Gastrocnemius medialis (tissue), 4 donors: ENCODE measurements at regions of chr5 and their contacts with region 1.

Region 1: GRCh38 chr5:72507909-72508575 is 832 bp upstream of the ZNF366 start:
- DNase-seq: no peak
- ATAC-seq: no peak
- H3K4me3 ChIP-seq: peak overlapping the region in 1 of 4 donors; percentile 45
- H3K27ac ChIP-seq: peak overlapping the region; percentile 67 to 82 (median 76)
- H3K4me1 ChIP-seq: peaks cover 60 to 86% of the 10 kb centered on the region in 2 donors
- H3K27me3 ChIP-seq: no peaks in the 10 kb centered on the region
- CTCF ChIP-seq: no peak
- POLR2A ChIP-seq: no peak

Region 2: DNA sequence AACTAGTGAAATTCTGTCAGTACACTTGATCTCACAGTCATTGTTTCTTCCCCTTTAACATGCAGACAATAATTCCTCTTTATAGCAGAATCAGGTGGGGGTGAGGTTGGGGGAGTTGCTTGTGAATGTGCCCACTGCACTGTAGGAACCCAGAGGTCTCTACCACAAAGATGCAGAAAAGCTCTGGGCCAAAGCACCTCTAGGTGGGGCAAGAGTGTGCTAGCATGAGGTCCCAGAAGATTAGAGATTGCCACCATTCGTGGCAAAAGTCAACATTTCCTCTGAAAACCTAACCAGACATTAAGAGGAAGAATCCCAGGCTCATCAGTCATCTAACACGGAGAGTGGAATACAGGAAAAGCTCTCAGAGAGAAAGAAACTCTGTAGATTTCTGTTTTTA is 113.4 kb before region 1 on chr5:
- in situ Hi-C with region 1: no loop called
- intact Hi-C with region 1: loop called (anchors 5 kb)
- DNase-seq: no peak
- ATAC-seq: no peak
- H3K4me3 ChIP-seq: no peak overlapping the region
- H3K27ac ChIP-seq: no peak overlapping the region
- H3K4me1 ChIP-seq: peaks cover 26 to 28% of the 10 kb centered on the region in 2 donors
- H3K27me3 ChIP-seq: no peaks in the 10 kb centered on the region
- CTCF ChIP-seq: peak in 2 of 5 experiments; percentile 12 to 33
- POLR2A ChIP-seq: no peak

Region 3: DNA sequence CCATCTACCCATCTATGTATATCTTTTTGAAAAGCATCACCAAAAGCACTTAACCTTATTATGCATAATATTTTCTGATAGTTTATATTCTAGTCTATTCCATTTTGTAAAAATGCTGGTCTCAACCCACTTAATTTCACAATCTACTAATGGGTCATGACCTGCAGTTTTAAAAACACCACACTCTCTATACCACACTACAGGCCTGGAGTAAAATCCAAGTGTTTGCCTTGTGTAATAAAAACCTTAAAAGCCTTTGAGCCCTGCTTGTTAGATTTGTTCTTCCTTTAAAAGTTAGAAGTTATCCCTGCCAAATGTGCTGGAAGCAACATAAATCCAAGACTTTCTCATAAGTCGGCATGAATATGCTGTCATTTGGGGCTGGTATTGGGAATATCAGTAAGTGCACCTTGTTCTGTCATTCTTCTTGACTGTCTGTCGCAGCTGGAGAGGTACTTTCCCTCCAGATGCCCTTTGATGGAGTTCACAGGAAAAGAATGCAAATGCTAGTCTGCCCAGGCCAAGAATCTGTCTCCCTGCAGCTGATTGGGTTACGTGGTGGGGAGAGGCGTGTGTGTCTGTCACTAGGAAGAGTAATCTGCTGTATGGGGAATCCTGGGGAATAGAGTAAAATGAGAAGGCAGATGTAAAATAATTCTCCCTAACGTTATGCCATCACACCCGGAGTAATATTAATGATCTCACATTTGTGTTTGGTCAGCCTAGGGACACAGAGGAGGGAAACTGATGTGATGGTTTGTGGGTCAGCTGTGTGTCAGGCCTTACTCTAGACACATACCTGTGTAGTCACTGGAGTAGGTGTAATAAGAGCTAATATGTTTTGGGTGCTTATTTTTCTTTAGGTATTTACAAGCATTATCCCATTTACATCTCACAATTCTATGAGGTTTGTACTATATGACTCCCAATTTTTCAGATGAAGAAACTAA is 80.3 kb before region 1 on chr5:
- in situ Hi-C with region 1: no loop called
- intact Hi-C with region 1: no loop called
- DNase-seq: peak; percentile 18 to 55
- ATAC-seq: peak; percentile 81 to 95
- H3K4me3 ChIP-seq: no peak overlapping the region
- H3K27ac ChIP-seq: peak overlapping the region; percentile 19 to 69 (median 44)
- H3K4me1 ChIP-seq: peaks cover 25 to 28% of the 10 kb centered on the region in 2 donors
- H3K27me3 ChIP-seq: no peaks in the 10 kb centered on the region
- CTCF ChIP-seq: no peak
- POLR2A ChIP-seq: no peak

Region 4: DNA sequence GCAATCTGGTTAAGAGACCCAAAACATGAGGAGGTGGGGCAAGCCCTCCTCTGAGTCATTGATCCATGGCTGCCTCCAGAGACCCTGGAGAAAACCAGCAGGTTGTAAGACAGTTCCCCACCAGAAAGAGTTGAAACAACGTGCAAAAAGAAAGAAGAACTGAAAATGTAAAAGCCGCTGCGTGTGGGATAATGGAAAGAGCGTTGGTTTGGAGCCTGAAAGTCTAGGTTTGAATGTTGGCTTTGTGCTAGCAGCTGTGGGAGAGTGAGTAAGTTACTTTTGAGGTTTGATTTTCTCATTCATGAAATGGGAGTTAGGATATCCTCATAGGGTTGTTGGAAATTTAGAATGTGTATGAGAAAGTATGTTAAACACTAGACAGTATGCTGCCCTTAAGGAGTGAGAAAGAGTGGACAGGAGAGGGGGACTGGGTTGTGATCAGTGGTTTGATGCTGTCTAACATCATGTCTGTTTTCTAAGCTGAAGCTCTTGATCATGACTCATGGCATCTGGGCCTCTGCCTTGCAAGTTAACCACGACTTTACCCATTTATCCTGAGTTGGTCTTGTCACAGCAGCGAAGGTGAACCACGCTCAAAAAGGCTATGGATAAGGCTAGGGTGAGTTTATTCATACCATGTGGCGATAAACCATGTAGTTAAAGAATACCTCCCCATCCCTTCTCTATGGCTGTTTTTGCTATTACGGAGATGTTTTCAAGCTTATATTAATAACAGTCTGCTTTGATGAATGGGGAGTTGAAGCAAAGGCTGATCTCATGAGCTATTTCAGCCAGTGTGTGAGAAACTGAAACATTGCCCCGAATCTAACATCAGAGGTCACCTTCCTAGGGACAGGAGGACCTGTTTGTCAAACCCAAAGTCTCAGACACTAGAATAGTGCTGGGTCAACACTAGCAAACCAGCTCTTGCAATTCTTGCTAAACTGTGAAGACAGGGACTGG is 42.2 kb before region 1 on chr5:
- in situ Hi-C with region 1: no loop called
- intact Hi-C with region 1: loop called (anchors 5 kb)
- DNase-seq: no peak
- ATAC-seq: peak; percentile 39 to 40
- H3K4me3 ChIP-seq: no peak overlapping the region
- H3K27ac ChIP-seq: peak overlapping the region; percentile 69 to 79 (median 74)
- H3K4me1 ChIP-seq: peaks cover 48 to 55% of the 10 kb centered on the region in 2 donors
- H3K27me3 ChIP-seq: no peaks in the 10 kb centered on the region
- CTCF ChIP-seq: no peak
- POLR2A ChIP-seq: no peak